MCF 10A (cell line): ENCODE measurements at regions of chr19 and their contacts with region 1.

Region 1: GRCh38 chr19:45643024-45643926 is 4.1 kb upstream of the EML2 start:
- DNase-seq: peak; percentile 87
- H3K4me3 Mint-ChIP-seq: peak overlapping the region; percentile 41
- H3K27ac Mint-ChIP-seq: peak overlapping the region; percentile 90
- H3K4me1 Mint-ChIP-seq: peaks cover 31% of the 10 kb centered on the region
- H3K27me3 Mint-ChIP-seq: no peaks in the 10 kb centered on the region
- CTCF ChIP-seq: peak; percentile 99

Region 2: DNA sequence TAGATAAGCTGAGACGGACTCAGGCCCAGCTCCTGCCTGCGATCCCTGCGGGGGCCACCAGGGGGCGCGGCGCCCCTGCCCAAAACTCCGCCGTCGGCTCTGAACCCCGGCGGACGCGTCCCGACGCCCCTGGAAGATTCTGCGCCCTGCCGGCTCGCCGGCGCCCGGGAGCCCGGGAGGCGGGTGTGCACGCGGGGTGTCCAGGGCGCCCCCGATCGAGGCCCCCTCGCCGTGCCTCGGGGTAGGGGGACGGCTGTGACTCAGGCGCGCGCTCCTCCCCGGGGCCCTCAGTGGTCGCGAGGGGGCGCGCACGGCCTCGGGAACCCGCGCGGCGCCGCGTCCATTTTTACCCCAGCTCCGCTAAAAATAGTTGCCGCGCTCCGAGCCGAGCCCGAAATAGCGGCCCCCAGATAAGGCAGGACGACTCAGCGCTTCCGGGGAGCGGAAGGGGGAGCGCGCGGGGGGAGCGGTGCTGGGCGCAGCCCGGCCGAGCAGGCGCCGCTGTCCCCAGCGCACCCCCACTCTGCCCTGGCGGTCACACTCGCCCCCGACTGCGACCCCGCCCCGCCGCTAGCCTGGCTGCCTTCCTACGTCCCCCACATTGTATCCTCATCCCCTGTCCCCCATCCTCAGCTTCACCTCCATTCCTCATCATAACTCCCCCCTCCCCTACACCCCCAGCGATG is 203.6 kb before region 1 on chr19:
- CTCF ChIA-PET with region 1: interaction called, 9 read pairs
- POLR2A ChIA-PET with region 1: interaction called, 3 read pairs
- intact Hi-C with region 1: loop called (anchors 2 kb)
- DNase-seq: peak; percentile 73
- H3K4me3 Mint-ChIP-seq: peak overlapping the region; percentile 64
- H3K27ac Mint-ChIP-seq: no peak overlapping the region
- H3K4me1 Mint-ChIP-seq: peaks cover 17% of the 10 kb centered on the region
- H3K27me3 Mint-ChIP-seq: no peaks in the 10 kb centered on the region
- CTCF ChIP-seq: peak; percentile 98

Region 3: DNA sequence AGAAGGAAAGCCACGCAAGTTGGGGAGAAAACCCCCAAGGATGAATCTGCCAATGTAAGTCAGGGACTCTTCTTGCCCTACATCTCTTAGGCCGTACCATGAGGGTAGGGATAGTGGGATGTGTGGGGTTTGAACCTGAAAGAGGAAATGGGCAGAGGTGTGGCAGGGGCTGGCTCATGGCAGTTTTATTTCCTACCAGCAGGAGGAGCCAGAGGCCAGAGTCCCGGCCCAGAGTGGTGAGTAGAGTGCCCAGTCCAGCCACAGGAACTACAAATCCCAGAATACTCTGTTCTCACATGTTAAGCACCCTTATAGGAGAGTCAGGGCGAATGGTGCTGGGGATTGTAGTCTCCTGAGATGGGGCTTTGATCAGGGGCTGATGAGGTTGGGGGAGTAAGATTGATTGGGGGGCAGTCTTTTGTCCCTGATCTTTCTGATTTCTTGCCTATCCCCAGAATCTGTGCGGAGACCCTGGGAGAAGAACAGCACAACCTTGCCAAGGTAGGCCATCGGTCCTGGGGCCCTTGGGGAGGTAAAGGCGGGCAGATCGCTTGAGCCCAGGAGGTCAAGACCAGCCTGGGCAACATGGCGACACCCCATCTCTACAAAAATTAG is 119.5 kb before region 1 on chr19:
- CTCF ChIA-PET with region 1: interaction called, 7 read pairs
- POLR2A ChIA-PET with region 1: interaction called, 8 read pairs
- intact Hi-C with region 1: loop called (anchors 1 kb)
- DNase-seq: peak; percentile 87
- H3K4me3 Mint-ChIP-seq: no peak overlapping the region
- H3K27ac Mint-ChIP-seq: peak overlapping the region; percentile 69
- H3K4me1 Mint-ChIP-seq: peaks cover 13% of the 10 kb centered on the region
- H3K27me3 Mint-ChIP-seq: no peaks in the 10 kb centered on the region
- CTCF ChIP-seq: peak; percentile 82

Region 4: DNA sequence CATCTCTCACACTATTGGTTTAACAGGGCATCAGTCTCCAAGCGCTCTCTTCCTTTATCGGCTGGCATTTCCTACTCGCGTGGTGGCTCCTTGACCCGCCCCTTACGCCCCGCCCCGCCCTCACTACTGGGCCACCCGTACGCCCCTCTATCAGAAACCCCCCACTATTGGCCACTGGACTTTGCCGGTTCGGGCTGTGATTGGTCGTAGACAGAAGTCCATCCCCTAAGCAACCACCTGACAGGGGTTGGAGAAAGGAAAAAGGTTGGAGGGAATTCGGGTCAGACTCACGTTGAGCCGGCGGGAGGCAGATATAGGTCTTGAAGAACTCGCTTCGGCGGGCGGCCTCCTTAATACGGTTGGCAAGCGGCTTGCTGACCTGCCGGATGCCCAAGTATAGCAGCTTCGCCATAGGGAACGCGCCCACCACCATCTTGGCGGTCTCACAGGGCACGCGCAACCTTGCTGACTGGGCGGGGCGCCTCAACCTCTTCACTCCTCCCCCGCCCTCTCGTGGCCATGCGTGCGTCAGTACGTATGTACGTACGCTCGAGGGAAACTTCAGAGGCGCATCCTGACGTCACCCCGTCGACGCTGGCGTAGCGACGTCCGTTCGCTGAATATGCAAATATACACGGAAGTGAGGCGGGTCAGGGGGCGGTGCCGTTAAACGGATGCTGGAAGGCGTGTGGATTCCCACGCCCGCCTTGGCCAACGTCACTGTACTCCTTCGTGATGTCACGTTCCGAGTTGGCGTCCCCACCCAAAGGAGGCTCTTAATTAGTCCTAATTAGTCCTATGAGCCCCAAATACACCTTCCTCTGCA is 58.7 kb before region 1 on chr19 and contains the start of gene OPA3:
- CTCF ChIA-PET with region 1: interaction called, 14 read pairs
- POLR2A ChIA-PET with region 1: interaction called, 14 read pairs
- intact Hi-C with region 1: no loop called
- DNase-seq: peak; percentile 100
- H3K4me3 Mint-ChIP-seq: peak within 1 kb of the TSS; percentile 97
- H3K27ac Mint-ChIP-seq: peak within 1 kb of the TSS; percentile 98
- H3K4me1 Mint-ChIP-seq: peaks cover 11% of the 10 kb centered on the region
- H3K27me3 Mint-ChIP-seq: no peaks in the 10 kb centered on the region
- CTCF ChIP-seq: no peak
- total RNA-seq, gene OPA3: 16.8 and 17.3 TPM in 2 replicates

Region 5: GRCh38 chr19:45615795-45616708 is 27.2 kb before region 1 on chr19:
- CTCF ChIA-PET with region 1: interaction called, 63 read pairs
- POLR2A ChIA-PET with region 1: interaction called, 50 read pairs
- intact Hi-C with region 1: loop called (anchors 2 kb)
- DNase-seq: peak; percentile 97
- H3K4me3 Mint-ChIP-seq: no peak overlapping the region
- H3K27ac Mint-ChIP-seq: peak overlapping the region; percentile 95
- H3K4me1 Mint-ChIP-seq: peaks cover 19% of the 10 kb centered on the region
- H3K27me3 Mint-ChIP-seq: no peaks in the 10 kb centered on the region
- CTCF ChIP-seq: no peak

Region 6: DNA sequence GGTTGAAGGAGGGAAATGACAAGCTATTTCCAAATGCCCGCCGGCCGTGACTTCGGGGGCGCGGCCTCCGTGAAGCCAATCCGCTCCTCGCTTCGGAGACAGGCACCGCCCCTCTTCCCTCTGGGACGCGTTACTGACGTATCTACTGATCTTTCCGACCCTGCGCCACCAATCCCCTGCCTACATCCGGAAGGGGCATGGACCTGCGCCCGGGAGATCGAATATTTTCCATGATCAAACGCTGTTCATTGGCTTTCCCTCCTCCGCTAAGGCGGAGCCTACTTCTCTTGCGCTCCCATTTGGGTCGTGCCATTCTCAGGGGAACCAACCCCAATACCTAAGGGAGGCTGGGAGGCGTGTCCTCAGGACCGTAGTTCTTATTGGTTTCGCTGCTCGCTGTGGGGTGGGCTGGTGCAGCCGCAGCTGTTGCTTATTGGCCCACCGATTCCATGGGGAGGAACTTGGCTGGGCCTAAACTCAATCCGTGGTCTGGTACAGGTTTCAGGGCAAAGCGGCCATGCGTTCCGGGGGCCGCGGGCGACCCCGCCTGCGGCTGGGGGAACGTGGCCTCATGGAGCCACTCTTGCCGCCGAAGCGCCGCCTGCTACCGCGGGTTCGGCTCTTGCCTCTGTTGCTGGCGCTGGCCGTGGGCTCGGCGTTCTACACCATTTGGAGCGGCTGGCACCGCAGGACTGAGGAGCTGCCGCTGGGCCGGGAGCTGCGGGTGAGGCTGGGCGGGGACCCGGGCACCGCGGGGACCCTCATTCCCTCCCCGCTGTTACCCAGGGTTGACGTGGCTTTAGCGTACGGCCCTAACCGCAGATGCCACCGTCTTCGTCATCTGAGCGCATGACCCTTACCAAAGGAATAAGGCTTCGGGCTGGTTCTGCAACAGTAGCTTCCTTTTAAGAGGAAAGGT is 49.2 kb after region 1 on chr19 and contains the start of gene QPCTL:
- CTCF ChIA-PET with region 1: interaction called, 3 read pairs
- POLR2A ChIA-PET with region 1: interaction called, 21 read pairs
- intact Hi-C with region 1: no loop called
- DNase-seq: peak; percentile 100
- H3K4me3 Mint-ChIP-seq: peak within 1 kb of the TSS; percentile 85
- H3K27ac Mint-ChIP-seq: peak within 1 kb of the TSS; percentile 95
- H3K4me1 Mint-ChIP-seq: peaks cover 6% of the 10 kb centered on the region
- H3K27me3 Mint-ChIP-seq: no peaks in the 10 kb centered on the region
- CTCF ChIP-seq: no peak
- total RNA-seq, gene QPCTL: 14.9 and 17.3 TPM in 2 replicates